Activated naive CD4-positive, alpha-beta T cell treated with anti-CD3 and anti-CD28 coated beads for 36 hours (primary cell): ENCODE measurements at regions of chrX and their contacts with region 1.

Region 1: GRCh38 chrX:9285342-9285771 is 179.5 kb upstream of the TBL1X start:
- DNase-seq: peak; percentile 78
- H3K4me3 Mint-ChIP-seq: no peak overlapping the region
- H3K27ac Mint-ChIP-seq: peak overlapping the region; percentile 83
- H3K4me1 Mint-ChIP-seq: peaks cover 25% of the 10 kb centered on the region
- H3K27me3 Mint-ChIP-seq: no peaks in the 10 kb centered on the region

Region 2: DNA sequence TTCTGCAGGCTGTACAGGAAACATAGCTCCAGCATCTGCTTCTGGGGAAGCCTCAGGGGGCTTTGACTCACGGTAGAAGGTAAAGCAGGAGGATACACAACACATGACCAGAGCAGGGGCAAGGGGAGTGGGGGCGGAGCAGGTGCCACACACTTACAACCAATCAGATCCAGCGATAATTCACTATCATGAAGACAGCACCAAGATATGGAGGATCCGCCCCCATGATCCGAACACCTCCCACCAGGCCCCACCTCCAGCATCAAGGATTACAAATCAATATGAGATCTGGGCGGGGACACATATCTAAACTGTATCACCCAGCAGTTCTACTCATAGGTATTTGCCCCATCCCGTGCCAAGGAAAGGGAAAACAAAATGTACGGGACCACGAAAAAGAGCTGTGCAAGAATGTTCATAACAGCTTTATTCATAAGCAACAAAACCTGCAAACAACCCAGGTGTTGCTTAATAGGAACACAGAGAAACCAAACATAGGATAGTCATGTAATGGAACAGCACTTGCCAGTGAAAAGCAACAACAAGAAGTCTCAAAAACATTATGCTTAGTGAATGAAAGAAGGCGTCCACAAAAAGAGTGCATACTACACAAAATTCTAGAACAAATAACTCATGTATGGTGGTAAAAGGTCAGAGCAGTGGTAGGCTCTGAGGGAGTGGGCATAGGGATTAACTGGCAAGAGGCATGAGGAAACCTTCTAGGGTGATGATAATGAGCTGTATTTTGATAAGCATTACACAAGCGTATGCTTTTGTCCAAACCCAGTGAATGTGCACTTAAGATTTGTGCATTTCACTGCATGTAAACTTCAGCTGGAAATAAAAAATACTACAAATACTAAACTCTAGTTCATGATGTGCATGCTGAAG is 120.6 kb before region 1 on chrX:
- CTCF ChIA-PET with region 1: no interaction called
- intact Hi-C with region 1: loop called (anchors 1 kb)
- DNase-seq: no peak
- H3K4me3 Mint-ChIP-seq: no peak overlapping the region
- H3K27ac Mint-ChIP-seq: no peak overlapping the region
- H3K4me1 Mint-ChIP-seq: peaks cover 41% of the 10 kb centered on the region
- H3K27me3 Mint-ChIP-seq: no peaks in the 10 kb centered on the region

Region 3: GRCh38 chrX:9258421-9259104 is 26.8 kb before region 1 on chrX:
- CTCF ChIA-PET with region 1: no interaction called
- intact Hi-C with region 1: loop called (anchors 1 kb)
- DNase-seq: no peak
- H3K4me3 Mint-ChIP-seq: no peak overlapping the region
- H3K27ac Mint-ChIP-seq: no peak overlapping the region
- H3K4me1 Mint-ChIP-seq: peaks cover 51% of the 10 kb centered on the region
- H3K27me3 Mint-ChIP-seq: no peaks in the 10 kb centered on the region

Region 4: GRCh38 chrX:9352694-9353411 is 67.5 kb after region 1 on chrX:
- CTCF ChIA-PET with region 1: no interaction called
- intact Hi-C with region 1: loop called (anchors 1 kb)
- DNase-seq: peak; percentile 58
- H3K4me3 Mint-ChIP-seq: no peak overlapping the region
- H3K27ac Mint-ChIP-seq: peak overlapping the region; percentile 4
- H3K4me1 Mint-ChIP-seq: peaks cover 29% of the 10 kb centered on the region
- H3K27me3 Mint-ChIP-seq: no peaks in the 10 kb centered on the region

Region 5: DNA sequence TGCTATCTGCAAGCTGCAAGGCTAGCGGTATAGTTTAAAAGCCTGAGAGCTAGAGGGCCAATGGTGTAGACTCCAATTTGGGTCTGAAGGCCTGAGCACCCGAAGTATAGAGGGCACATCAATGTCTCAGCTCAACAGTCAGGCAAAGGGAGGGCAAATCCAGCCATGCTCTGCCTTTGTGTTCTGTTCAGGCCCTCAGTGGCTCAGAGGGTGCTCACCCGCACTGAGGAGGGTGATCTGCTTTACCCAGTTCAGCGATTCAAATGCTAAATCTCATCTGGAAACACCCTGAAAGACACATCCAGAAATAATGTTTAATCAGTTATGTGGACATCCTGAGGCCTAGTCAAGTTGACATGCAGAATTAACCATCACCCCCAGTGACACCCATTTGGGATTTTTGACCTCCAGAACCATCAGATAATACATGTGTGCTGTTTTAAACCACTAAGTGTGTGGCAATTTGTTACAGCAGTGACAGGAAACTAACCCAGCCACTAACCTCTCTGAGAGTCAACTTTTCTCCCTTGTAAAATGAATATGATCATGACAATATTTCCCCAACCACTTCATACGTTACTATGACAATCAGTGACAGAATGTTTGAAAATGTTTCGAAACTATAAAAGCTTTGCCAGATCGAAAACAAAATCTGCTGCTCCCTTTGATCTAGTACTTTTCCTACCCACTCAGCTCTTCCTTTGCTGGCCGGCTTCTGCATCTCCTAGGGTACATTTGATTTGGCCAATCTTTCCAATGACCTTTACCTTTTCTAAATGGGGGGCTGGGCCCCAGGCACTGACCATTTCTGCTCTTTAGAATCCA is 171.1 kb after region 1 on chrX:
- CTCF ChIA-PET with region 1: no interaction called
- intact Hi-C with region 1: loop called (anchors 1 kb)
- DNase-seq: peak; percentile 45
- H3K4me3 Mint-ChIP-seq: no peak overlapping the region
- H3K27ac Mint-ChIP-seq: peak overlapping the region; percentile 74
- H3K4me1 Mint-ChIP-seq: peaks cover 38% of the 10 kb centered on the region
- H3K27me3 Mint-ChIP-seq: no peaks in the 10 kb centered on the region

Region 6: GRCh38 chrX:9829308-9830267 is 544.2 kb after region 1 on chrX:
- CTCF ChIA-PET with region 1: no interaction called
- intact Hi-C with region 1: loop called (anchors 1 kb)
- DNase-seq: peak; percentile 71
- H3K4me3 Mint-ChIP-seq: no peak overlapping the region
- H3K27ac Mint-ChIP-seq: no peak overlapping the region
- H3K4me1 Mint-ChIP-seq: peaks cover 4% of the 10 kb centered on the region
- H3K27me3 Mint-ChIP-seq: peaks cover 13% of the 10 kb centered on the region

Region 7: DNA sequence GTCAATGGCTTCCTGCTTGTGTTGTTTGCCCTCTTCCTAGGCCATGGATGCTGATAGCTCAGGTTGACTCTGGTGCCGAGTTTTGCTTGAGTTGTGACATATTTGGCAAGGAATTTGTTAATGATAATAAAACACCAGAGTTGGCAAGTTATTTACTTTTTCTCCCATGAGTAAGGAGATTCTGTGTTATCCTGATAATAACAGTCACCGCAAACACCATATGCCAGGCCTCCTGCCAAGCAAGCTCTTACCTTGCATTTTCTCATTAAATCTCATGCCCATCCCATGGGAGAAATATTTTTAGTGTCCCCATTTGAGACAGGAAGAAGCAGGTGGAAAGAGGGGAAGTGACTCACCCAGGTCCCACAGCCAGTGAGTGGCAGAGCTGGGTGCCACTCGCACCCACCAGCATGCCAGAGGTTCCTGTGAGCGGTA is 804.0 kb after region 1 on chrX:
- CTCF ChIA-PET with region 1: no interaction called
- intact Hi-C with region 1: loop called (anchors 2 kb)
- DNase-seq: no peak
- H3K4me3 Mint-ChIP-seq: no peak overlapping the region
- H3K27ac Mint-ChIP-seq: no peak overlapping the region
- H3K4me1 Mint-ChIP-seq: peaks cover 20% of the 10 kb centered on the region
- H3K27me3 Mint-ChIP-seq: no peaks in the 10 kb centered on the region